Sciatic nerve (tissue), 2 donors: ENCODE measurements at regions of chr2 and their contacts with region 1.

Region 1: DNA sequence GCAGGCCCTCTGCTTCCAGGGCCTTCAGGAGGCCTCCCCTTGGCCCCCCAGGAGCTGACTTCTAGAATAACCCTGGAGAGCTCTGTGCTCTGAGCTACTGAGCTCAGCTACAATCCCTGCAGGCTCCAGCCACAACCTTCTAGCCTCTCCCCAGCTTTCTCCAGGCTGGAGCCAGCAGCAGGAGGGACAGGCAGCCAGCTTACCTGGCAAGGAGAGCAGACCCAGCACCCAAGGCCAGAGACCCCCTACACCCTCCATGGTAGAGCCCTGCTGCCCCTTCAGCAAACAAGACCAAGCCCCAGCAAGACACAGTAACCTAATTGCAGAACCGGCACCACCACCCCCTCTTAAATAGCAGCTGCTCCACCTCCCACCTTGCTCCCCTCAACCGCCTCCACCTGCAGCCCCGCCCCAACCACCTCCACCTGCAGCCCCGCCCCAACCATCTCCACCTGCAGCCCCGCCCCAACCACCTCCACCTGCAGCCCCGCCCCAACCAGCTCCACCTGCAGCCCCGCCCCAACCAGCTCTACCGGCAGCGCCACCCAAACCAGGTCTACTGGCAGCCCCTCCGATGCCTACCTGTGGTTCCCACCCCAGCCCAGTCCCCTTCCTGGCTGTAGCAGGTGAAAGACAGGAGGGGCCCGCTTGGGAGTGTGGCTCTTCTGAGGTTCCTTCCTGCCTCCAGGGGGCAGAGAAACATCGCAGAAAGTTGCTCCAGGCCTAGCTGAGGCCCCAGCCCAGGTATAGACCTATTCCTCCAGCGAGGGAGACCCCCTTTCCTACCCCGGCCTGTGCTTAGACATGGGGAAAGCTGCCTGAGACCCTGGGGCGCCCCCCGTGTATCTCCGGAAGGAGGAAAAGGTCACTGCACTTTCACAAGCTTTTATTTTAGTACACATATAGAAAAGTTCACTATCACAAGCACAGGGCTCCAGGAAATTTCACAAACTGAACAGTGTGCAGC is at the start of gene ASTL:
- DNase-seq: no peak
- ATAC-seq: peak; percentile 35
- total RNA-seq, gene ASTL: 0.31 TPM

Region 2: GRCh38 chr2:96116879-96117697 is 21.4 kb before region 1 on chr2:
- intact Hi-C with region 1: no loop called
- DNase-seq: peak; percentile 67
- ATAC-seq: peak; percentile 60

Region 3: GRCh38 chr2:96174251-96175144 is 36.0 kb after region 1 on chr2:
- intact Hi-C with region 1: loop called (anchors 5 kb)
- DNase-seq: peak; percentile 80
- ATAC-seq: peak; percentile 81

Region 4: DNA sequence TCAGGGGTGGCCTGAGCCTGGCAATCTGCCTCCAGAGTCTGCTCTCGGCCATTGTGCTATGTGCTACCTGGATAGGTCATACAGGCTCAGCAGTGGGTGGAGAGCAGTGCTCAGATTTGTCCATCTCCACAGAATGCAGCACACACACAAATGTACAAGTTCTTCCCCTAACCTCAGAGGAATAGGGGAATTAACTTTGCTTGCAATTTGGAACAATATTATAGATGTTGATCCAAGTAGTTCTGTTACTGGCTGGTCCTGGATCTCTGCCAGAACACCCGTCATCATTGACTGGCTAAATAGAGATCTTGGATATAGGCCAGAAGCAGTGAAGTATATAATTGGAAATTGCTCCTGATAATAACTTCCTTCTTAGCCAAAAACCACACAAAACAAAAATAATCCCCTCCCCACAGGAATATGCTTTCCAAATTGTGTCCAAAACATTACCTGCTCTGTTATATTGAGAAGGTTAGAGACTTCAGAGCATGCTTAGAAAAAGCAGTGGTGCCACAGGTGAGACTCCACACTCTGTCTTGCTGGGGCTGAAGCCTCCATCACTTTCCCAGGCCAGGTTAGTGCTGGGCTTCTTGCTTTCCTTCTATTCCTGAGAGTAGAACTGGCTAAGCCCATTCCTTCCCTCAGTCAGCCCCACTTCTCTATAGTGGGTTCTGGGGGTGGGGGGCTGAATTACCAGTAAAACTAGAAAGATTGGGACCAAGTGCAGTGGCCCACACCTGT is 235.9 kb after region 1 on chr2:
- intact Hi-C with region 1: no loop called
- DNase-seq: peak; percentile 68
- ATAC-seq: no peak